MCF 10A (cell line): ENCODE measurements at regions of chr18 and their contacts with region 1.

Region 1: DNA sequence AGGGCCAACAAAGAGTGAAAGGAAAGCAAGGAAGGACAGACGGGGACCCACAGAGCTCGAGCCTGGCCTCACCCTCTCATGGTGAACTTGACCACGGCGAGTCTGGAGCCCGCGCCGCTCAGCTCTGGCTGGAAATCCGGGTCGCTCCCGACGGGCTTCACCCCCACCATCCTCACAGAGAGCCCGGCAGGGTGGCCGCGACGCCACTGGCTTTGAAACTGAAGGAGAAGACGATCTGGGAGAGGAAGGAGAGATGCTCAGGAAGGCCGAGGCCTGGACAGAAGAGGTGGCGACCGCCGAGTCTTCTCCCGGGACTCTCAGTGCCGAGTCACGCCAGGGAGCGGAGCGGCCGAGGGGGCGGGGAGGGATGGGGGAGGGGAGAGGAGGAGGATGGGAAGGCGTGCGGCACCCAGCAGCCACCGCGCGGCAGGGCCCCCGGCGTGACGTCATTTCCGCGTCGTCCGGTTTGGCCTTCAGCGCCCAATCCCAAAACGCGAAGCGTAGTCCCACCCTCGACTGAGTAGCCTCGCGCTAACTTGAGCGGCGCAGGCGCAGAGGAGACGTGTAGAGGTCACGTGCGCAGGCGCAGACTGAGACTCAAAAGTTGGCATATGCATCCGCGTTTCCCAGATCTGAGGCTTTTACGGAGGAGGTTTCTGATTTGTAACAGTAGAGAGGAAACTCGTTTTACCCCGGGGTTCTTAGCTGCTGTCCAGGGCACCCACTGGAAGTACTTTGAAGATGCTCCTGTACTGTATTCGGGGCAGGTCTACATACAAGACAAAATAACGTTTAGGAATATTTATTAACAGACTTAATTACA is at the start of gene TXNL1:
- DNase-seq: peak; percentile 98
- H3K4me3 Mint-ChIP-seq: peak within 1 kb of the TSS; percentile 98
- H3K27ac Mint-ChIP-seq: peak within 1 kb of the TSS; percentile 99
- H3K4me1 Mint-ChIP-seq: peaks cover 45% of the 10 kb centered on the region
- H3K27me3 Mint-ChIP-seq: no peaks in the 10 kb centered on the region
- CTCF ChIP-seq: no peak
- total RNA-seq, gene TXNL1: 86.6 and 97.4 TPM in 2 replicates

Region 2: GRCh38 chr18:56511996-56512395 is 126.5 kb before region 1 on chr18:
- CTCF ChIA-PET with region 1: no interaction called
- POLR2A ChIA-PET with region 1: no interaction called
- intact Hi-C with region 1: no loop called
- DNase-seq: no peak
- H3K4me3 Mint-ChIP-seq: no peak overlapping the region
- H3K27ac Mint-ChIP-seq: no peak overlapping the region
- H3K4me1 Mint-ChIP-seq: no peaks in the 10 kb centered on the region
- H3K27me3 Mint-ChIP-seq: no peaks in the 10 kb centered on the region
- CTCF ChIP-seq: no peak

Region 3: GRCh38 chr18:56650944-56651770 is 12.7 kb after region 1 on chr18 and contains the start of gene WDR7:
- CTCF ChIA-PET with region 1: interaction called, 3 read pairs
- POLR2A ChIA-PET with region 1: interaction called, 71 read pairs
- intact Hi-C with region 1: no loop called
- DNase-seq: peak; percentile 99
- H3K4me3 Mint-ChIP-seq: peak within 1 kb of the TSS; percentile 77
- H3K27ac Mint-ChIP-seq: peak within 1 kb of the TSS; percentile 65
- H3K4me1 Mint-ChIP-seq: peaks cover 19% of the 10 kb centered on the region
- H3K27me3 Mint-ChIP-seq: no peaks in the 10 kb centered on the region
- CTCF ChIP-seq: no peak
- total RNA-seq, gene WDR7: 12.6 and 17.3 TPM in 2 replicates

Region 4: GRCh38 chr18:56995579-56996188 is 357.2 kb after region 1 on chr18:
- CTCF ChIA-PET with region 1: no interaction called
- POLR2A ChIA-PET with region 1: no interaction called
- intact Hi-C with region 1: no loop called
- DNase-seq: no peak
- H3K4me3 Mint-ChIP-seq: no peak overlapping the region
- H3K27ac Mint-ChIP-seq: no peak overlapping the region
- H3K4me1 Mint-ChIP-seq: peaks cover 6% of the 10 kb centered on the region
- H3K27me3 Mint-ChIP-seq: no peaks in the 10 kb centered on the region
- CTCF ChIP-seq: no peak